ENCODE measurements at regions of chr12 and their contacts with region 1.

Region 1: GRCh38 chr12:44015335-44015941 is 179.6 kb downstream of the TMEM117 start:
- DNase-seq: no peak
- H3K4me3 ChIP-seq: no peak overlapping the region
- H3K27ac ChIP-seq: no peak overlapping the region
- H3K4me1 ChIP-seq: no peaks in the 10 kb centered on the region
- H3K27me3 ChIP-seq: no peaks in the 10 kb centered on the region
- CTCF ChIP-seq: peak; percentile 39

Region 2: GRCh38 chr12:43436597-43436996 is 578.8 kb before region 1 on chr12:
- intact Hi-C with region 1: no loop called
- DNase-seq: no peak
- H3K4me3 ChIP-seq: no peak overlapping the region
- H3K27ac ChIP-seq: no peak overlapping the region
- H3K4me1 ChIP-seq: no peaks in the 10 kb centered on the region
- H3K27me3 ChIP-seq: no peaks in the 10 kb centered on the region
- CTCF ChIP-seq: no peak

Region 3: DNA sequence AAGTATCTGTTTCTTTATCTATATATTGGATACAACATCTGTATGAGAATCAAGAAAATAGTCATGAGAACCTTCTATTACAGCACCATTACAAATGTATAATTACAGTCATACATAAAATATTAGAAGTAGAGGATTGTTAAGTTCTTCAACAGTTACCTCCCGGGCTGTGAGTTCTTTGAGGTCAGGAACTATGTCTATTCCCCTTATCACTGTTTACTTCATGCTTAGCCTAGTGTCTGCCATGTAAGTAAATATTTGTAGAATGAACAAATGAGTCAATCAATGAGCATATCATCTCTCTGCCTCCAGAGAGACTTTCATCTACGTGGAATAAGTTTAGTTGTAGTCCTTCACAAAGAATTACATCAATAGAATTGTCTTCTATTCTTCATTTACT is 304.1 kb before region 1 on chr12:
- intact Hi-C with region 1: no loop called
- DNase-seq: no peak
- H3K4me3 ChIP-seq: no peak overlapping the region
- H3K27ac ChIP-seq: no peak overlapping the region
- H3K4me1 ChIP-seq: no peaks in the 10 kb centered on the region
- H3K27me3 ChIP-seq: no peaks in the 10 kb centered on the region
- CTCF ChIP-seq: no peak

Region 4: DNA sequence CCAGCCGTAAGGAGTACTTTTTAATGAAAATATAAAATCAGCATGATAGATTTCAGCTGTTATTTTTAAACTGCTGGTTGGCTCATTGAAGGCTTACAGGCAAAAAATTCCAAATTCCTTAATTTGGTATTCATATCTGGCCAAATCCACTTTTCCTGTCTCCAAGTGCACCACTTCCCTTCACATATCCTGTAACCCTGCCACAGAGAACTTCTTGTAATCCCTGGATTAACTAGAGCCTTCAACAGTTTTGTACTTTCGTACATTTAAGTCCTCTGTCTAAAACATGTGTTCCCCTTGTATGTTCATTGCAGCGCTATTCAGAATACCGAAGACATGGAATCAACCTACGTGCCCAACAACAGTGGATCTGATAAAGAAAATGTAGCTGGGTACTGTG is 266.4 kb before region 1 on chr12:
- intact Hi-C with region 1: no loop called
- DNase-seq: no peak
- H3K4me3 ChIP-seq: no peak overlapping the region
- H3K27ac ChIP-seq: no peak overlapping the region
- H3K4me1 ChIP-seq: no peaks in the 10 kb centered on the region
- H3K27me3 ChIP-seq: no peaks in the 10 kb centered on the region
- CTCF ChIP-seq: no peak

Region 5: GRCh38 chr12:44088647-44089046 is 73.2 kb after region 1 on chr12:
- intact Hi-C with region 1: no loop called
- DNase-seq: no peak
- H3K4me3 ChIP-seq: no peak overlapping the region
- H3K27ac ChIP-seq: no peak overlapping the region
- H3K4me1 ChIP-seq: no peaks in the 10 kb centered on the region
- H3K27me3 ChIP-seq: no peaks in the 10 kb centered on the region
- CTCF ChIP-seq: no peak

Region 6: DNA sequence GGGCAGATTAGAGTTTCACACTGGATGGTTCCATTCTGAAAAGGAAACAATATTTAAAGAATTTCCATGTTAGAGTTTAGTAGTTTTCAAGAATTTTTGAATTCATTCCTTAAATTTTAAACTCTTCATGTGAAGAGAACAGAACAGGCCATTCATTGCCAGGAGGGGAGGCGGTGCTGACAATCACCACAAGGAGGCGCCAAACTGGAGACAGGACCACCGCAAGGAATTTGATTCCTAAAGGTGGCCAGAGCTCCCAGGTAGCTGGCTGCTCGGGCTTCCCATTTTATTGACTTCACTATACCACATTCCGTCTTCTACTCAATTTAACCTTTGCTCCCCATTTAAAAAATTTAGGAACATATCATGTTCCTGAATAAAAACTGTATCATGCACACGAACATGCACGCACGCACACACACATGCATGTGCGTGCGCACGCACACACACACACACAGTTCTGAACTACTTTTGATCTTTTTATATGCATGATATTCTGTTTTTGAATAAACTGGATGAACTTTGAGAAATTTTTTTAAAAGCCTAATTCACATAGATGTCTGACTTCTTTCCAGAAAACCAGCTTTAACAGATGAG is 759.5 kb after region 1 on chr12:
- intact Hi-C with region 1: loop called (anchors 10 kb)
- DNase-seq: peak; percentile 41
- H3K4me3 ChIP-seq: no peak overlapping the region
- H3K27ac ChIP-seq: no peak overlapping the region
- H3K4me1 ChIP-seq: no peaks in the 10 kb centered on the region
- H3K27me3 ChIP-seq: no peaks in the 10 kb centered on the region
- CTCF ChIP-seq: peak; percentile 72

Region 7: GRCh38 chr12:44930972-44931600 is 915.6 kb after region 1 on chr12:
- intact Hi-C with region 1: loop called (anchors 5 kb)
- DNase-seq: no peak
- H3K4me3 ChIP-seq: no peak overlapping the region
- H3K27ac ChIP-seq: no peak overlapping the region
- H3K4me1 ChIP-seq: no peaks in the 10 kb centered on the region
- H3K27me3 ChIP-seq: no peaks in the 10 kb centered on the region
- CTCF ChIP-seq: peak; percentile 54